MCF 10A (cell line): ENCODE measurements at regions of chr4 and their contacts with region 1.

Region 1: GRCh38 chr4:76305971-76306881 is at the start of gene STBD1:
- DNase-seq: peak; percentile 73
- H3K4me3 Mint-ChIP-seq: peak within 1 kb of the TSS; percentile 94
- H3K27ac Mint-ChIP-seq: peak within 1 kb of the TSS; percentile 66
- H3K4me1 Mint-ChIP-seq: peaks cover 39% of the 10 kb centered on the region
- H3K27me3 Mint-ChIP-seq: no peaks in the 10 kb centered on the region
- CTCF ChIP-seq: no peak
- total RNA-seq, gene STBD1: 3.7 and 5.7 TPM in 2 replicates

Region 2: GRCh38 chr4:76208005-76208765 is 98.0 kb before region 1 on chr4:
- CTCF ChIA-PET with region 1: interaction called, 6 read pairs
- POLR2A ChIA-PET with region 1: interaction called, 76 read pairs
- intact Hi-C with region 1: loop called (anchors 5 kb)
- DNase-seq: peak; percentile 83
- H3K4me3 Mint-ChIP-seq: peak overlapping the region; percentile 74
- H3K27ac Mint-ChIP-seq: peak overlapping the region; percentile 98
- H3K4me1 Mint-ChIP-seq: peaks cover 34% of the 10 kb centered on the region
- H3K27me3 Mint-ChIP-seq: no peaks in the 10 kb centered on the region
- CTCF ChIP-seq: no peak

Region 3: GRCh38 chr4:76219299-76220055 is 86.7 kb before region 1 on chr4:
- CTCF ChIA-PET with region 1: interaction called, 5 read pairs
- POLR2A ChIA-PET with region 1: interaction called, 76 read pairs
- intact Hi-C with region 1: loop called (anchors 5 kb)
- DNase-seq: peak; percentile 85
- H3K4me3 Mint-ChIP-seq: no peak overlapping the region
- H3K27ac Mint-ChIP-seq: peak overlapping the region; percentile 68
- H3K4me1 Mint-ChIP-seq: peaks cover 28% of the 10 kb centered on the region
- H3K27me3 Mint-ChIP-seq: no peaks in the 10 kb centered on the region
- CTCF ChIP-seq: no peak

Region 4: DNA sequence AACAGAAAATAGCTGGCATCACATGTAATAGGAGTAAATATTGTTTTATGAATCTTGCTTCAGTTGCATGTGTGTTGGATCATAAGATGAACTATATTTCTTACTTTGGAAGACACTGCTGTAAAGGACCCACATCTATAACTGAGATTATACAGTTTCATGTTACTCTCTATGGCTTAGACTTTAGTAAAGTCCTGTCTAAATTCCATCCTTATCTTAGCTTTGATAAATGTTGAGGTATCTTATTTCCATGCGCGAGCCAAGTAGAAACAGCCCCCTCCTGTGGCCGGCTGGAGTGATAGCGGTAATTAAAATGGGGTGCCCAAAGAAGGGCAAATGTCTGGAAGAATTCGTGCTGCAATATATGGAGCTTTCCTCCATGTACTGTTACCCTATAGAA is 71.7 kb after region 1 on chr4:
- CTCF ChIA-PET with region 1: interaction called, 13 read pairs
- POLR2A ChIA-PET with region 1: interaction called, 20 read pairs
- intact Hi-C with region 1: loop called (anchors 1 kb)
- DNase-seq: peak; percentile 57
- H3K4me3 Mint-ChIP-seq: no peak overlapping the region
- H3K27ac Mint-ChIP-seq: no peak overlapping the region
- H3K4me1 Mint-ChIP-seq: peaks cover 16% of the 10 kb centered on the region
- H3K27me3 Mint-ChIP-seq: no peaks in the 10 kb centered on the region
- CTCF ChIP-seq: peak; percentile 48

Region 5: GRCh38 chr4:76504613-76505465 is 198.6 kb after region 1 on chr4:
- CTCF ChIA-PET with region 1: interaction called, 14 read pairs
- POLR2A ChIA-PET with region 1: interaction called, 3 read pairs
- intact Hi-C with region 1: loop called (anchors 10 kb)
- DNase-seq: peak; percentile 75
- H3K4me3 Mint-ChIP-seq: no peak overlapping the region
- H3K27ac Mint-ChIP-seq: no peak overlapping the region
- H3K4me1 Mint-ChIP-seq: no peaks in the 10 kb centered on the region
- H3K27me3 Mint-ChIP-seq: no peaks in the 10 kb centered on the region
- CTCF ChIP-seq: peak; percentile 70

Region 6: GRCh38 chr4:76535603-76536367 is 229.6 kb after region 1 on chr4:
- CTCF ChIA-PET with region 1: no interaction called
- POLR2A ChIA-PET with region 1: no interaction called
- intact Hi-C with region 1: no loop called
- DNase-seq: peak; percentile 18
- H3K4me3 Mint-ChIP-seq: no peak overlapping the region
- H3K27ac Mint-ChIP-seq: no peak overlapping the region
- H3K4me1 Mint-ChIP-seq: no peaks in the 10 kb centered on the region
- H3K27me3 Mint-ChIP-seq: no peaks in the 10 kb centered on the region
- CTCF ChIP-seq: no peak